ENCODE measurements at regions of chr5 and their contacts with region 1.

Region 1: GRCh38 chr5:132019857-132020555 is 8.5 kb upstream of the ACSL6 start:
- DNase-seq: peak; percentile 93
- H3K4me3 Mint-ChIP-seq: peak overlapping the region; percentile 37
- H3K27ac Mint-ChIP-seq: peak overlapping the region; percentile 92
- H3K4me1 Mint-ChIP-seq: peaks cover 28% of the 10 kb centered on the region
- H3K27me3 Mint-ChIP-seq: peaks cover 28% of the 10 kb centered on the region

Region 2: DNA sequence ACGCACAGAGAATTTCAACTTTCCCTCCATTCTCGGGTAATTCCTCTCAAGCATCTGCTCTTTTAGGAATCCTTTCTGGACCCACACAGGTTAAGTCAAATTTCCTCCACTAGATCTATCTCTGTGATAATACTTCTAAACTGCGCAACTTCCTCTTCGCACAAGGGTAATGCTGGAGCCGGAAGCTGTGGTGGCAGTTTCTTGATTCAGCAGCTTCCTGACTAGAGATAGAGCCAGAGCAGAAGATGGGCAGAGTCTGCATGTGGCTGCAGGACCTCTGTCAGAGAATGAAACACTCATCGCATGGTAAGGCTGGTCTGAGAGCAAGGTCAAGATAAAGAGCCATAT is 767.2 kb before region 1 on chr5:
- CTCF ChIA-PET with region 1: no interaction called
- intact Hi-C with region 1: loop called (anchors 10 kb)
- DNase-seq: peak; percentile 88
- H3K4me3 Mint-ChIP-seq: peak overlapping the region; percentile 94
- H3K27ac Mint-ChIP-seq: peak overlapping the region; percentile 95
- H3K4me1 Mint-ChIP-seq: peaks cover 72% of the 10 kb centered on the region
- H3K27me3 Mint-ChIP-seq: no peaks in the 10 kb centered on the region

Region 3: DNA sequence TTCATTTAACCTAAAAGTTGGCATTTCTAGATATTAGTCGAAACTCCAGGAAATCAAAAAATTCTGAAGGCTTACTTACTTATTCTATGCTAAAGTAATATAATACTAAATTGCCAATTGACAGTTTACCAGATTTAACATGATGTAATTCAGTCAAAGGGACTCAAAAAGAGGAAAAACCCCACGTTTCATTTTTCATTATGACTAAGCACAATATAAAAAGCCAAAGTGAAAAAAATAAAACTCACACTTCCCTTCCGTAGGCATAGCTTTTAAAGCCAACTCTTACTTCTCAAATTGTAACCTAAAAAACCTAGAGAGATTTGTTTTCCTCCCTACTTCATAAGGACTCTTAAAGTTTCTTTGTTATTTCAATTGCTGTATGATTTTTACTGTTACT is 531.5 kb before region 1 on chr5:
- CTCF ChIA-PET with region 1: interaction called, 5 read pairs
- intact Hi-C with region 1: loop called (anchors 2 kb)
- DNase-seq: no peak
- H3K4me3 Mint-ChIP-seq: no peak overlapping the region
- H3K27ac Mint-ChIP-seq: peak overlapping the region; percentile 65
- H3K4me1 Mint-ChIP-seq: peaks cover 49% of the 10 kb centered on the region
- H3K27me3 Mint-ChIP-seq: no peaks in the 10 kb centered on the region

Region 4: DNA sequence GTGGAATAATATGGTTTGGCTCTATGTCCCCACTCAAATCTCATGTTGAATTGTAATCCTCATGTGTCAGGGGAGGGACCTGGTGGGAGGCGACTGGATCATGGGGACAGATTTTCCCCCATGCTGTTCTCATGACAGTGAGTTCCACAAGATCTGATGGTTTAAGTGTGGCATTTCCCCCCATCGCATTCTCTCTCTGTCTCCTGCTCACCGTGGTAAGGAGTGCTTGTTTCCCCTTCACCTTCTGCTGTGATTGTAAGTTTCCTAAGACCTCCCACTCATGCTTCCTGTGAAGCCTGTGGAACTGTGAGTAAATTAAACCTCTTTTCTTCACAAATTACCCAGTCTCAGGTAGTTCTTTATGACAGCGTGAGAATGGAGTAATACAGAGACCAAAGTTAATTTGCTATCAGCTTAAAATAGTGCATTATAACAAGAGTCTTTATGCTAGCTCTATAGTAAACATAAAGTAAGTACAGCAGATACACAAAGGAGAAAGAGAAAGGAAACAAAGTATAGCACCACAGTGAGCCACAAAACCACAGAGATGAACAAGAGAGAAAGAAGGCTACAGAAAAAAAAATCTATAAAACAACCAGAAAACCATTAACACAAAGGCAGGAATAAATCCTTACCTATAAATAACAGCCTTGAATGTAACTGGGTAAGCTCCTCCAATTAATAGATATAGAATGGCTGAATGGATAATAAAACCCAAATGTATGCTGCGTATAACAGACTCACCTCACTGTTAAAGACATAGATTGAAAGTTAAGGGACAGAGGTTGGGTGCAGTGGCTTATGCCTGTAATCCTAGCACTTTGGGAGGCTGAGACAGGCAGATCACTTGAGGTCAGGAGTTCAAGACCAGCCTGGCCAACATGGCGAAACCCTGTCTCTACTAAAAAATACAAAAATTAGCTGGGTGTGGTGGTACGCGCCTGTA is 424.6 kb before region 1 on chr5:
- CTCF ChIA-PET with region 1: no interaction called
- intact Hi-C with region 1: loop called (anchors 1 kb)
- DNase-seq: peak; percentile 37
- H3K4me3 Mint-ChIP-seq: peak overlapping the region; percentile 48
- H3K27ac Mint-ChIP-seq: peak overlapping the region; percentile 75
- H3K4me1 Mint-ChIP-seq: peaks cover 54% of the 10 kb centered on the region
- H3K27me3 Mint-ChIP-seq: no peaks in the 10 kb centered on the region

Region 5: DNA sequence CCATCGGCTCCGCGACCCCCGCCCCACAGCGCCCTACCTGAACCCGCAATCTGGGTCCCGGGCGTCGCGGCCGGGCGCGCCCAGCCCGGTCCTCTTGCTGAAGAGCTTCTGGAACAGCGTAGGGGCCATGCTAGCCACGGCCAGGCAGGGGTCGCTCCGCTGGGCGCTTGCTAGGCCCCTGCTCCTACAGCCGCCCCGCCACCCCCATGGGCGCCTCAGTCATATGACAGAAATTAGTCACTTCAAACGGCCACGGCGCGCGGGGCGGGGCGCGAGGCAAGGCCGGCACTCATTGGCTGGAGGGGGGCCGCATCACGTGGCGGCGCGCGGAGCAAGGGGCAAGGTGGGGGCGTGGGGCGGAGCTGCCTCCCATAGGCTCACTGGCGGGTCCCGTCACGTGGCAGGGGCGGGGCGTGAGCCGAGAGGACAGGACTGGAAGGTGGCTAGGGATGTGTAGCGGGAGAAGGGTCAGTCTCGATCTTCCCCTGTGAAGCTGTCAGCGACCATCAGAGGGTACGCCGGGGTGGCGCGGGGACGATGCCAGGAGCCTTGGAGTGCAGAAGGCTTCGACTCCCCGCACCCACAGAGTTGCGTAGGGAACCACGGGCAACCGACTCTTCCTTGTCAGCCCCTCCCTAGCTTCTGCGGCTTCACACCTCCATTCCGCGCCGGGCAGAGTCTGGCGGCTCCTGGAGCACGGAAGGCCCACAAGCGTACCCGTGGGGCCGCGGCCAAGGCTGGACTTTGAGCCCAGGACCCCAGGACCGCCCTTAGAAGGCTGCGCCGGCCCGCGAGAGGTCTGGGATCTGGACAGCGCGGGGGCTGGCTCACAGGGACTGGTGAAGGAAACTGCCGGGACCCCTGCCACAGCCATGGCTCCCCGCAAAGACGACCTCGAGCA is 223.0 kb before region 1 on chr5 and contains the start of gene FNIP1:
- CTCF ChIA-PET with region 1: no interaction called
- intact Hi-C with region 1: loop called (anchors 1 kb)
- DNase-seq: peak; percentile 99
- H3K4me3 Mint-ChIP-seq: peak within 1 kb of the TSS; percentile 97
- H3K27ac Mint-ChIP-seq: peak within 1 kb of the TSS; percentile 78
- H3K4me1 Mint-ChIP-seq: peaks cover 19% of the 10 kb centered on the region
- H3K27me3 Mint-ChIP-seq: no peaks in the 10 kb centered on the region
- total RNA-seq, gene FNIP1: 16.8 to 17.8 TPM

Region 6: DNA sequence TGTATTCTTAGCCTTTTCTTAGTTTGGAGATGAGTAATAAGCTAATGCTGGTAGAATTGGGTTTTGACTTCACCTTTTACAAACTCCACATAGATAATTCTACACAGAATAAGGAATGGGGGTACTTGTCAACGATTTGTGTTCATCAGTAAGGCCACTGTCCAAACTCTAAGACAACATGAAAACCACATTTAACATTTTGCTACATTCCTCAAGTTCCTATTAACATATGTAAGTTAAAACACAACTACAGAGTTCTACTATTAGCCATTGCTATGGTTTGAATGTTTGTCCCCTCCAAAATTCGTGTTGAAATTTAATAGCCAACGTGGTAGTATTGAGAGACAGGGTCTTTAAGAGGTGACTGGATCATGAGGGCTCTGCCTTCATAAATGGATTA is 106.4 kb before region 1 on chr5:
- CTCF ChIA-PET with region 1: no interaction called
- intact Hi-C with region 1: no loop called
- DNase-seq: no peak
- H3K4me3 Mint-ChIP-seq: no peak overlapping the region
- H3K27ac Mint-ChIP-seq: no peak overlapping the region
- H3K4me1 Mint-ChIP-seq: no peaks in the 10 kb centered on the region
- H3K27me3 Mint-ChIP-seq: no peaks in the 10 kb centered on the region

Region 7: DNA sequence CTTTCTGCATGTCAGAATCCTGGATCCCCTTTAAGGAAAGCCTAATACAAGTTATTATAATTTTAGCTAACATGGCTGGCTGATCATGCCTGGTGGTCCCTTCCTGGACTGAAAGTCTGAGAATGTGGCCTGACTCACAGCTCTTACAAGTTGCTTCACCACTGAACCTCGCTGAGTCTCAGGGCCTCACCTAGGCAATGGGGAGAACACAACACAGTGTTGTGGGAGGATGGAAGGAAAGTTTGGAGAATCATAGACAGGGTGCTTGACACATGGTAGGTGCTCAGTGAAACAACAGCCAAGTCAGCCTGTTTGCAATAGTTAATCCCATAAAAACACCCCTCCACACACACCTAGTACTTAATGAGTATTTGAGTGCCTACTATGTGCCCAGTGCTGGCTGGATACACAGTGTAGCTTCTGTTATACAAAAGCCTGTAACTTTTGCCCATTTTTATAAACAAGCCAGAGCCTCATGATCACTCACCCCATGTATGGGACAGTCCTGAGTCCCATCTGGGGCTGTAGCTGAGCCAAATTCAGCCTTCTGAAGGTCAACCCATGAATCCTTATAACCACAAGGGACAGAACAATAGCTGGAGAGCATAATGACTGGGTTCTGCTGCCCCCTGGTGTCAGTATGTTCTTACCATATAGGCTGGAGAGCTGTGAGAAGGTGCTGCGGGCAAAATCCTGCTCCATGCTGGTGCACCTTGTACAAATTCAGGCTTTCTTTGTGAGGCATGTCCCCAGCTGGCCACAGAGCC is 12.4 kb before region 1 on chr5:
- CTCF ChIA-PET with region 1: interaction called, 11 read pairs
- intact Hi-C with region 1: loop called (anchors 2 kb)
- DNase-seq: peak; percentile 93
- H3K4me3 Mint-ChIP-seq: no peak overlapping the region
- H3K27ac Mint-ChIP-seq: no peak overlapping the region
- H3K4me1 Mint-ChIP-seq: peaks cover 17% of the 10 kb centered on the region
- H3K27me3 Mint-ChIP-seq: peaks cover 19% of the 10 kb centered on the region

Region 8: GRCh38 chr5:132490486-132491367 is 470.7 kb after region 1 on chr5 and contains the start of gene IRF1:
- CTCF ChIA-PET with region 1: no interaction called
- intact Hi-C with region 1: loop called (anchors 5 kb)
- DNase-seq: peak; percentile 98
- H3K4me3 Mint-ChIP-seq: peak within 1 kb of the TSS; percentile 91
- H3K27ac Mint-ChIP-seq: peak within 1 kb of the TSS; percentile 97
- H3K4me1 Mint-ChIP-seq: peaks cover 64% of the 10 kb centered on the region
- H3K27me3 Mint-ChIP-seq: no peaks in the 10 kb centered on the region
- total RNA-seq, gene IRF1: 84.3 to 88.4 TPM